ENCODE measurements at regions of chr3 and their contacts with region 1.

Region 1: DNA sequence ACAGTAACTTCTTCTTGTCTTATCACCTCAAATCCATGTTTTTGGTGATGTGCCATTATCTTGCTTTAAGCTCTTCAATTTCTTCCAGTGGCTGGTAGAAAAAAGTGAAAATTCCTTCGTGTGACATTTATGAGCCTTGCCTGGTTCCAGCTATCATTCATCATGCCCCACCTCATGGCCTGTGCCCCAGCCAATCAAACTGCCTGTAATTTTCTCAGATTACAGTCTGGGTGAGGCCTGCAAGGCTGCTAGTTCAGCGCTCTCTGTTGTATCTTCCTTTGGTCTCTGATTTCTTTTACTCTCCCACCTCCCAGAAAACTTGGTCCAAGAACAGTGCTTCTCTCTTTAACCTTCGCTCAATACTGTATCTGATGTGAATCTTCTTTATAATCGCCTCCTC is 249.3 kb upstream of the ZNF717 start:
- DNase-seq: no peak
- CTCF ChIP-seq: no peak

Region 2: DNA sequence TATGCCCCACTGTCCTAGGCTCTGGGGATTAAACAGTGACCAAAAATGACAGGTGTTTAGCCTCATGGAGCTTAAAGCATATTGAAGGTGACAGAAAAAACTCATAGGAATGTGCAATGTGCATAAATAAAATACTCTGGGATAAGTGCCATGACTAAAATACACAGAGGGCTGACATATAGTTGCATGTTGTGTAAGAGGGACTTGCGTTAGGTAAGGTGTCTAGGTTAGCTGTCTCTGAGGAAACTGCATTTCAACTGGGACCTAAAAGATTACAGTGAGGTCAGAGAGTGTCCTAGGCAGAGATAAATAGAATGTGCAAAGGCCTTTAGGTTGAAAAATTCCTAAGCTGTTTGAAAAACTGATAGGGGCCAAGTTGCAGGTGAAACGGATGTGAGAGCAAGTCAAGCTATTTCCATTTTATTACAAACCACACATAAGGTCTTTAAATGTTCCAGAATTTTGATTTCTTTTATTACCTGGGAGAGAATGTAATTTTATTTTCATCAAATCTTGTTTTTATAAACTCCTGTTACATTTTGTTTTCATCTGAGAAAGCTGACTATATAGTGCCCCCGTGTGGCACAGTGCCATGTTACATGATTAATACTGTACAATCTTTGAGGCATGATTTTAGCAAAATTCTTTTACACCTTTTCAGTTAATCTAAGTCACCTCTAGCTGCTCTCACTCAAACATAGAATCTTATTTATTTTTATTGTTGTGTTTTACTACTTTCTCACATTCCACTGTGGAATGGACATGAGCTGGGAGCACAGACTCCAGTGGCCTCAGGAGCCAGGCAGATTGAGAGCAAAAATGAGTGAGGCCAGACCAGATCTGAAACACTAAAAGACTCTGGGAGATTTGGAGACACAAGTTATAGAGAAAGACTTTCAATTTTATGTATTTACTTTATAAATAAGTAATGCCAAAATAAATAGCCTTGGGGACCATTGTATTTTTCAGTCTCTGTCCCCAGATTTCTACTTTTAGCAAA is 10.2 kb after region 1 on chr3:
- CTCF ChIA-PET with region 1: interaction called, 18 read pairs
- POLR2A ChIA-PET with region 1: no interaction called
- DNase-seq: peak; percentile 13
- CTCF ChIP-seq: peak; percentile 45

Measured in GM10248 (cell line).